CD4-positive, alpha-beta T cell (primary cell): ENCODE measurements at regions of chr5 and their contacts with region 1.

Region 1: DNA sequence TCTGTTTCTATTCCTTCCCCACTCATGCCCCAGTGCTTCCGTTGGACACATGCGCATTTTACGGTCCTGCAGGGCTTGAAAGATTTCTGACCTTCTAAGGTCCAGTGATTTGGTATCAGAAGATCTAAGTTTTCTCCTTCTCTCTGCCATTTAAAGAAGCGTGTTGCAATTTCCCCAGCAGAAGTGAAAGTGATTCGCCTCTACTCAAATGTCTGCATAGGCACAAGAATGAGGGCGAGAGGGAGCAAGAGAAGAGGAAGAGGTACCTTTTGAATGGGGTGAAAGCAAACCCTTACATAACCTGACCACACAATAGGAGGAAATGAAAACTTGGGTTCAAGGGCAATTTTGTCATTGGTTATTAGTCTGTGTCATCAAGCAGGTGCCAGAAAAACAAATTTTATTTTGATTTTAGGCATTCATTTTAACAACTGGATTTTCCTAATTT is 31.7 kb upstream of the NR3C1 start:
- DNase-seq: peak in 10 of 14 experiments; percentile 17 to 81 (median 30)
- ATAC-seq: peak; percentile 50
- H3K4me3 ChIP-seq: peak overlapping the region; percentile 60
- H3K4me3 Mint-ChIP-seq: peak overlapping the region; percentile 92
- H3K27ac ChIP-seq: peak overlapping the region; percentile 62 to 68
- H3K27ac Mint-ChIP-seq: peak overlapping the region; percentile 93
- H3K4me1 ChIP-seq: peaks cover 34% of the 10 kb centered on the region
- H3K4me1 Mint-ChIP-seq: peaks cover 73% of the 10 kb centered on the region
- H3K27me3 ChIP-seq: no peaks in the 10 kb centered on the region
- H3K27me3 Mint-ChIP-seq: no peaks in the 10 kb centered on the region
- CTCF ChIP-seq: no peak

Region 2: DNA sequence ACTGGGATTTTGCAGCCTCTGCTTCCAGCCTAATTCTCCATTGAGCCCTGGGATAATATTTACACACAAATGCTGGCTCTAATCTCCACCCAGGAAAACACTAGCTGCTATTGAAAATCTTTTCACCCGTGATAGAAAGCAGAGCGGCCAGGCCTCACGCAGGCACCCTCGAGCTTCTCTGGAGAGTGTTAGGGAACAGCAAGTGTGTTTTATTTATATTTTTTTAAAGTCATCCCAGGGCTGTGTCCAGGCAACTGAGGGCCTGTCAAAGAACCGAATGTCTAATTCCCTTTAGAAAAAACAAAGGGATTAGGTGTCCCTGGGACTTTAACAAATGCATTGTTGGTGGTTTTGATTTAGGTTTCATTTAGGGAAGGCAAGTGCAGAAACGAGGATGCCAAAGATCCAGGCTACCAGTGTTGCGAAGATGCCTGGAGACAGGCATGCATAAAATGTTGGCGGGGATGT is 1059.3 kb before region 1 on chr5:
- CTCF ChIA-PET with region 1: no interaction called
- POLR2A ChIA-PET with region 1: no interaction called
- intact Hi-C with region 1: loop called in 1 of 2 experiments (anchors 10 kb)
- DNase-seq: no peak
- ATAC-seq: no peak
- H3K4me3 ChIP-seq: no peak overlapping the region
- H3K4me3 Mint-ChIP-seq: no peak overlapping the region
- H3K27ac ChIP-seq: no peak overlapping the region
- H3K27ac Mint-ChIP-seq: no peak overlapping the region
- H3K4me1 ChIP-seq: no peaks in the 10 kb centered on the region
- H3K4me1 Mint-ChIP-seq: peaks cover 4% of the 10 kb centered on the region
- H3K27me3 ChIP-seq: no peaks in the 10 kb centered on the region
- H3K27me3 Mint-ChIP-seq: no peaks in the 10 kb centered on the region
- CTCF ChIP-seq: no peak

Region 3: DNA sequence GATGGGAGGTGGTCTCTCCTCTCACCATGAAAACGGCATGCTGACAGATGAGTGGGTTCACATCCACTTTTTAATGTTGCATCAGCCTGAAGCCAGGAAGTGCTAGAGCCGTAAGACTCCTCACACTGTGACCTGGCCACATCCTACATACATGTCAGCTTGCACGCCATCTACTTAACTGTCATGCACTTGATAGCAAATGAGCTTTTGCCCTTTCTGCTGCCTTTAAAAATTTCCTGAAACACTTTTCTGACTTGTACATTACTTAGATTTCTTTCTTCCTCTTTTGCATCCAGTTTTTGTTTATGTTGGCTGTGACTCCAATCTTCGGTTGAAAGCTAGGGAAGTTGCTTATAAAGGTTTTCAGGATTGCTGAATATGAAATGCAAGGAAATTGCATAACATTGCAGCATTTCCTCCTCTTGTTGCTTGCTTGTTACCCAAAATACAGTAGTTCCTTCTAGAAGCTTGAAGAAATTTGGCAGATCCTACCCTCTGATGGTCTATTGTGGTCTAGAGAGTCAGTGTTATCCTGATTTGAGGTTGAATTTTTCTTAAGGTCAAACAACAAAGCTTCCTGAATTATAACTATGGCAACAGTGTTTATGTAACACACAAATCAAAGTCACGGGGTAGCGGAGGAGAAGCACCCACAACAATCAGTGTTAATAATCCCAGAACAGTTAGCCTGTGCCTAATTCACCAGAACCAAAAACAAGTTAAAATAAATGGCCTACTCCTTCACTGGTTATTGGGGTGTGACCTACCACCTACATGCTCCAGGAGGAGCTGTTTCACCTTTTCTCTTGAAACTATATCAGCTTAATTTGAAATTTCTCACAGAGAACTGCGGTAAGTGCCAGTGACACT is 432.5 kb before region 1 on chr5:
- CTCF ChIA-PET with region 1: no interaction called
- POLR2A ChIA-PET with region 1: interaction called, 21 read pairs
- intact Hi-C with region 1: no loop called
- DNase-seq: peak in 13 of 14 experiments; percentile 10 to 91 (median 37)
- ATAC-seq: peak; percentile 83
- H3K4me3 ChIP-seq: peak overlapping the region; percentile 3
- H3K4me3 Mint-ChIP-seq: peak overlapping the region; percentile 55
- H3K27ac ChIP-seq: peak overlapping the region; percentile 76 to 87
- H3K27ac Mint-ChIP-seq: peak overlapping the region; percentile 91
- H3K4me1 ChIP-seq: peaks cover 33% of the 10 kb centered on the region
- H3K4me1 Mint-ChIP-seq: peaks cover 48% of the 10 kb centered on the region
- H3K27me3 ChIP-seq: no peaks in the 10 kb centered on the region
- H3K27me3 Mint-ChIP-seq: no peaks in the 10 kb centered on the region
- CTCF ChIP-seq: peak; percentile 73

Region 4: DNA sequence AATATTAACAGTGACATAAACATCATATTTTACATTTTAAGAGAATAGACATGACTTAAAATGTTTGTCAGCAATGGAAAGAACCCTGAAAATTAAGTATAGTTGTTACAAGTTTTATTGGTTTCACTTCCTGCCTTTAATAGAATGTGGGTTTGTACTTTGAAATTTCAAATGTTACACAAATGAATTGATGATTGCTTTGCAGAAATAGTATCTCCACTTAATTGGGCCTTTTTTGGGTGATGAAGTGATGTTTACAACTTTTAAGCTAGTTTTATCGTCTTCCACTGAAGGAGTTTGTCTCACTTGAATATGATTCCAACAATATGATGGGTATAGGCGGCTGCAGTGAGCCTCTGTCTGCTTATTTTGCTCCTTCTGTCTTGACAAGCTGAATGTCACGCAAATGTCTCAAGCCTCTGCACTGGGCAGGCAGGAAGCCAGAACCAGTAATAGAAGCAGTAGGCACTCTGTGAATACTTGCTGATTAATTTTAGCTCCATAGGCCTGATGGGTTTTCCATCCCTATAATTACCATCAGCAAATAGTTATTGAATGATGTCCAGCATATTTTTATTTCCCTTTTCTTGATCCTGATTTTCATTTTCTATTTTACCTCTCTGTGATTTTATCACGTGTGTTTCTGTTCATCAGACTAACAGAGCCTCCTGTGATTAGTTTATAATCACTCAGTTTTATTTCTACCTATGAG is 21.1 kb before region 1 on chr5:
- CTCF ChIA-PET with region 1: interaction called, 4 read pairs
- POLR2A ChIA-PET with region 1: interaction called, 71 read pairs
- intact Hi-C with region 1: loop called (anchors 1 to 2 kb)
- DNase-seq: peak in 3 of 14 experiments; percentile 21 to 38 (median 22)
- ATAC-seq: no peak
- H3K4me3 ChIP-seq: no peak overlapping the region
- H3K4me3 Mint-ChIP-seq: peak overlapping the region; percentile 3
- H3K27ac ChIP-seq: no peak overlapping the region
- H3K27ac Mint-ChIP-seq: peak overlapping the region; percentile 64
- H3K4me1 ChIP-seq: peaks cover 11% of the 10 kb centered on the region
- H3K4me1 Mint-ChIP-seq: peaks cover 33% of the 10 kb centered on the region
- H3K27me3 ChIP-seq: no peaks in the 10 kb centered on the region
- H3K27me3 Mint-ChIP-seq: no peaks in the 10 kb centered on the region
- CTCF ChIP-seq: no peak

Region 5: GRCh38 chr5:143536364-143536763 is 101.1 kb after region 1 on chr5:
- CTCF ChIA-PET with region 1: no interaction called
- POLR2A ChIA-PET with region 1: no interaction called
- intact Hi-C with region 1: no loop called
- DNase-seq: no peak
- ATAC-seq: no peak
- H3K4me3 ChIP-seq: no peak overlapping the region
- H3K4me3 Mint-ChIP-seq: no peak overlapping the region
- H3K27ac ChIP-seq: no peak overlapping the region
- H3K27ac Mint-ChIP-seq: no peak overlapping the region
- H3K4me1 ChIP-seq: no peaks in the 10 kb centered on the region
- H3K4me1 Mint-ChIP-seq: no peaks in the 10 kb centered on the region
- H3K27me3 ChIP-seq: no peaks in the 10 kb centered on the region
- H3K27me3 Mint-ChIP-seq: no peaks in the 10 kb centered on the region
- CTCF ChIP-seq: no peak

Region 6: DNA sequence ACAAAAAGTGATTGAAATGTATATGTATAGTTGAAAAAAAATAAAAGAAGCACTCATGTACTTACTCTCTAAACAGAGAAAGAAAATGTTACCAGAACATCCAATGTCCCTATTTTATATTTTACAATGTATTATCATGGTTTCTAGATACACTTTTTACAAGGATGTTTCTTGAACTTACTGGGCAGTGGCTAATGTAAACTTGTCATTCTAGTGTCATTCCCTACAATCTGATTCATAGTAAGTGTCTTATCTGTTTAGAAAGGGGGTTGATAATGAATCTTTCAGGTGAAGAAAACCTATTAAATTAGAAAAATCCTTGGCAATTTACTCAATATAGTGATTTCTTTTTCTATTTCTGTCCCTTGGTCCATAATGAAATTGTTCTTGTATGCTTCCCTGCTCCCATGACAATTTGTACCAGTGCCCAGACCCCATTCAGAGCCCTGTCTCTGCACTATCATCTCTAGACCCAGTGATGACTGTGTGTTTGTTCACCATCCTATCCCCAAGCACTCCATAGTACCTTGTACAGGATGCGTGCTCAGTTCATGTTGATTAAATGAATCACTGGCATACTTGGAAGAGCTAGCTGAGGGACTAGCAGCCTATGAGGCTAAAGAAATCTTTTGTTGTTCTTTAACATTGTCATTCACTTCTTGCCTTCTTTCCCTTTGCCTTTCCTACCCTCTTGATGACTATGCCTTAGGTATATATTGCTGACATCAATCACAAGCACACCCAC is 477.9 kb after region 1 on chr5:
- CTCF ChIA-PET with region 1: no interaction called
- POLR2A ChIA-PET with region 1: no interaction called
- intact Hi-C with region 1: no loop called
- DNase-seq: no peak
- ATAC-seq: no peak
- H3K4me3 ChIP-seq: no peak overlapping the region
- H3K4me3 Mint-ChIP-seq: no peak overlapping the region
- H3K27ac ChIP-seq: no peak overlapping the region
- H3K27ac Mint-ChIP-seq: no peak overlapping the region
- H3K4me1 ChIP-seq: no peaks in the 10 kb centered on the region
- H3K4me1 Mint-ChIP-seq: peaks cover 9% of the 10 kb centered on the region
- H3K27me3 ChIP-seq: no peaks in the 10 kb centered on the region
- H3K27me3 Mint-ChIP-seq: peaks cover 3% of the 10 kb centered on the region
- CTCF ChIP-seq: no peak

Region 7: GRCh38 chr5:144170276-144171024 is 735.2 kb after region 1 on chr5 and contains the starts of genes KCTD16 and YIPF5:
- CTCF ChIA-PET with region 1: no interaction called
- POLR2A ChIA-PET with region 1: interaction called, 10 read pairs
- intact Hi-C with region 1: no loop called
- DNase-seq: peak; percentile 93 to 99 (median 96)
- ATAC-seq: peak; percentile 96
- H3K4me3 ChIP-seq: peak within 1 kb of the TSS; percentile 79
- H3K4me3 Mint-ChIP-seq: peak within 1 kb of the TSS; percentile 95
- H3K27ac ChIP-seq: peak within 1 kb of the TSS; percentile 91
- H3K27ac Mint-ChIP-seq: peak within 1 kb of the TSS; percentile 95
- H3K4me1 ChIP-seq: peaks cover 11% of the 10 kb centered on the region
- H3K4me1 Mint-ChIP-seq: peaks cover 53% of the 10 kb centered on the region
- H3K27me3 ChIP-seq: no peaks in the 10 kb centered on the region
- H3K27me3 Mint-ChIP-seq: no peaks in the 10 kb centered on the region
- CTCF ChIP-seq: no peak
- total RNA-seq, gene KCTD16: not detected
- total RNA-seq, gene YIPF5: 57.6 to 64.8 TPM